H1 (cell line): ENCODE measurements at regions of chr5 and their contacts with region 1.

Region 1: GRCh38 chr5:140806834-140807775 is at the start of gene PCDHA4:
- DNase-seq: peak in 1 of 2 experiments; percentile 94
- H3K4me3 ChIP-seq: peak within 1 kb of the TSS; percentile 80 to 88 (median 85)
- H3K27ac ChIP-seq: peak within 1 kb of the TSS; percentile 31; the same call in 1 of the 2 replicates
- H3K4me1 ChIP-seq: no peaks in the 10 kb centered on the region
- H3K27me3 ChIP-seq: no peaks in the 10 kb centered on the region
- CTCF ChIP-seq: peak; percentile 75 to 81 (median 81)
- EP300 ChIP-seq: no peak
- POLR2A ChIP-seq: peak in 1 of 2 experiments; percentile 59; a peak in 2 of 3 replicates
- RAD21 ChIP-seq: peak; percentile 75 to 76
- total RNA-seq, gene PCDHA4: 5.3 and 5.7 TPM in 2 replicates

Region 2: GRCh38 chr5:140767444-140767843 is 39.7 kb before region 1 on chr5:
- CTCF ChIA-PET with region 1: no interaction called
- POLR2A ChIA-PET with region 1: no interaction called
- DNase-seq: no peak
- H3K4me3 ChIP-seq: no peak overlapping the region
- H3K27ac ChIP-seq: no peak overlapping the region
- H3K4me1 ChIP-seq: no peaks in the 10 kb centered on the region
- H3K27me3 ChIP-seq: no peaks in the 10 kb centered on the region
- CTCF ChIP-seq: no peak
- EP300 ChIP-seq: no peak
- POLR2A ChIP-seq: no peak
- RAD21 ChIP-seq: no peak

Region 3: GRCh38 chr5:140795259-140795641 is 11.9 kb before region 1 on chr5:
- CTCF ChIA-PET with region 1: interaction called, 59 read pairs
- POLR2A ChIA-PET with region 1: interaction called, 4 read pairs
- DNase-seq: no peak
- H3K4me3 ChIP-seq: peak overlapping the region; percentile 51 to 86 (median 58)
- H3K27ac ChIP-seq: no peak overlapping the region
- H3K4me1 ChIP-seq: no peaks in the 10 kb centered on the region
- H3K27me3 ChIP-seq: no peaks in the 10 kb centered on the region
- CTCF ChIP-seq: peak in 2 of 3 experiments; percentile 54 to 59; a peak in 2 of 4 replicates
- EP300 ChIP-seq: no peak
- POLR2A ChIP-seq: no peak
- RAD21 ChIP-seq: no peak; a peak in 1 of 4 replicates

Region 4: GRCh38 chr5:140827704-140828361 is 20.7 kb after region 1 on chr5 and contains the start of gene PCDHA6:
- CTCF ChIA-PET with region 1: interaction called, 58 read pairs
- POLR2A ChIA-PET with region 1: interaction called, 3 read pairs
- DNase-seq: no peak
- H3K4me3 ChIP-seq: peak within 1 kb of the TSS in 1 of 4 experiments; percentile 62; a peak in 2 of 8 replicates
- H3K27ac ChIP-seq: no peak within 1 kb of the TSS
- H3K4me1 ChIP-seq: no peaks in the 10 kb centered on the region
- H3K27me3 ChIP-seq: no peaks in the 10 kb centered on the region
- CTCF ChIP-seq: no peak
- EP300 ChIP-seq: no peak
- POLR2A ChIP-seq: no peak
- RAD21 ChIP-seq: no peak
- total RNA-seq, gene PCDHA6: 6.5 and 7.1 TPM in 2 replicates

Region 5: DNA sequence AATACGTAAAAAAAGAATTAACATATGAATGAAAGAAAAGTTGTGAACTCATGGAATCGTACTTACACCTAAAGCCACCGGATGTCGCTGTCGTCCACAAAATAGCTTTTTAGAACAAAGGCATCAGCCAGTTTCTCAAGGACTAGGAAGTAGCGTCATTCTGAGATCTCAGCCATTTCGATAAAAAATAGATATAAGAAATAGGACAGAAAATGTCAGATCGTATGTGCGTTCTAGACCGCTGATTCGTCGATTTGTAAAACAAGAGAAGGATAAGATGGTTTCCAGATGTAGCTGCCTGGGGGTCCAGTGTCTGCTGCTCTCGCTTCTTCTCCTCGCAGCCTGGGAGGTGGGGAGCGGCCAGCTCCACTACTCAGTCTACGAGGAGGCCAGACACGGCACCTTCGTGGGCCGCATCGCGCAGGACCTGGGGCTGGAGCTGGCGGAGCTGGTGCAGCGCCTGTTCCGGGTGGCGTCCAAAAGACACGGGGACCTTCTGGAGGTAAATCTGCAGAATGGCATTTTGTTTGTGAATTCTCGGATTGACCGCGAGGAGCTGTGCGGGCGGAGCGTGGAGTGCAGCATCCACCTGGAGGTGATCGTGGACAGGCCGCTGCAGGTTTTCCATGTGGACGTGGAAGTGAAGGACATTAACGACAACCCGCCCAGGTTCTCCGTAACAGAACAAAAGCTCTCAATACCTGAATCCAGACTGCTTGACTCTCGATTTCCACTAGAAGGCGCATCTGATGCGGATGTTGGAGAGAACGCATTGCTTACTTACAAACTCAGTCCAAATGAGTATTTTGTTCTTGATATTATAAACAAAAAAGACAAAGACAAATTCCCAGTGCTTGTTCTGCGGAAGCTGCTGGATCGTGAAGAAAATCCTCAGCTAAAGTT is 48.9 kb after region 1 on chr5 and contains the start of gene PCDHA10:
- CTCF ChIA-PET with region 1: interaction called, 12 read pairs
- POLR2A ChIA-PET with region 1: no interaction called
- DNase-seq: no peak
- H3K4me3 ChIP-seq: peak within 1 kb of the TSS; percentile 67 to 83 (median 72)
- H3K27ac ChIP-seq: no peak within 1 kb of the TSS; the same call in 1 of the 2 replicates
- H3K4me1 ChIP-seq: no peaks in the 10 kb centered on the region
- H3K27me3 ChIP-seq: no peaks in the 10 kb centered on the region
- CTCF ChIP-seq: peak in 2 of 3 experiments; percentile 40 to 47; a peak in 3 of 4 replicates
- EP300 ChIP-seq: no peak
- POLR2A ChIP-seq: no peak
- RAD21 ChIP-seq: peak; percentile 45 to 57; a peak in 3 of 4 replicates
- total RNA-seq, gene PCDHA10: 5.4 and 5.5 TPM in 2 replicates

Region 6: GRCh38 chr5:140875066-140876065 is 68.3 kb after region 1 on chr5 and contains the start of gene PCDHA12:
- CTCF ChIA-PET with region 1: interaction called, 13 read pairs
- POLR2A ChIA-PET with region 1: no interaction called
- DNase-seq: no peak
- H3K4me3 ChIP-seq: peak within 1 kb of the TSS; percentile 55 to 67 (median 65)
- H3K27ac ChIP-seq: no peak within 1 kb of the TSS
- H3K4me1 ChIP-seq: no peaks in the 10 kb centered on the region; a peak in 2 of 7 replicates
- H3K27me3 ChIP-seq: no peaks in the 10 kb centered on the region
- CTCF ChIP-seq: peak in 2 of 3 experiments; percentile 64 to 69; a peak in 3 of 4 replicates
- EP300 ChIP-seq: no peak
- POLR2A ChIP-seq: peak in 1 of 2 experiments; percentile 68; a peak in 2 of 3 replicates
- RAD21 ChIP-seq: peak; percentile 69 to 73
- total RNA-seq, gene PCDHA12: 9.3 and 10.6 TPM in 2 replicates